ENCODE measurements at regions of chr1 and their contacts with region 1.

Region 1: GRCh38 chr1:150613061-150613920 is 16.1 kb downstream of the ENSA start:
- DNase-seq: peak in 1 of 2 experiments; percentile 86
- H3K4me3 ChIP-seq: no peak overlapping the region
- H3K27ac ChIP-seq: peak overlapping the region; percentile 97
- H3K4me1 ChIP-seq: peaks cover 52% of the 10 kb centered on the region
- H3K27me3 ChIP-seq: no peaks in the 10 kb centered on the region
- CTCF ChIP-seq: no peak

Region 2: GRCh38 chr1:150596095-150596892 is 17.0 kb before region 1 on chr1:
- CTCF ChIA-PET with region 1: no interaction called
- POLR2A ChIA-PET with region 1: interaction called, 20 read pairs
- intact Hi-C with region 1: no loop called
- DNase-seq: no peak
- H3K4me3 ChIP-seq: no peak overlapping the region
- H3K27ac ChIP-seq: 0 out of 2 replicates have a peak overlapping the region, but pooled peaks have one; percentile 17
- H3K4me1 ChIP-seq: peaks cover 30% of the 10 kb centered on the region
- H3K27me3 ChIP-seq: no peaks in the 10 kb centered on the region
- CTCF ChIP-seq: no peak

Region 3: GRCh38 chr1:150642296-150642695 is 29.0 kb after region 1 on chr1:
- CTCF ChIA-PET with region 1: no interaction called
- POLR2A ChIA-PET with region 1: no interaction called
- intact Hi-C with region 1: no loop called
- DNase-seq: no peak
- H3K4me3 ChIP-seq: no peak overlapping the region
- H3K27ac ChIP-seq: no peak overlapping the region
- H3K4me1 ChIP-seq: no peaks in the 10 kb centered on the region
- H3K27me3 ChIP-seq: no peaks in the 10 kb centered on the region
- CTCF ChIP-seq: no peak

Region 4: DNA sequence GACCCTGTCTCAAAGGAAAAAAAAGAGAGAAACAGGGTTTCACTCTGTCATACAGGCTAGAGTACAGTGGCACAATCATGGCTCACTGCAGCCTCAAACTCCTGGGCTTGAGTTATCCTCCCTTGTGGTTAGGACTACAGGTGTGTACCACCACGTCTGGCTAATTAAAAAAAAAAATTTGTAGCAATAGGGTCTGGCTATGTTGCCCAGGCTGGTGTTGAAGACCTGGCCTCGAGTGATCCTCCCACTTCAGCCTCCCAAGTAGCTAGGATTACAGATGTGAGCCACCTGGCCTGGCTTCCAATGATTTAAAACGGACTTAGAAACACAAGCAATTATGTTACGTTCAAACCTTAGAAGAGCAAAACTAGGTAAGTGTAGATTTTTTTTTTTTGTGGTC is 61.6 kb after region 1 on chr1:
- CTCF ChIA-PET with region 1: no interaction called
- POLR2A ChIA-PET with region 1: interaction called, 14 read pairs
- intact Hi-C with region 1: no loop called
- DNase-seq: no peak
- H3K4me3 ChIP-seq: no peak overlapping the region
- H3K27ac ChIP-seq: no peak overlapping the region
- H3K4me1 ChIP-seq: no peaks in the 10 kb centered on the region
- H3K27me3 ChIP-seq: no peaks in the 10 kb centered on the region
- CTCF ChIP-seq: no peak

Measured in PC-9 (cell line).